ENCODE measurements at regions of chr6 and their contacts with region 1.

Region 1: DNA sequence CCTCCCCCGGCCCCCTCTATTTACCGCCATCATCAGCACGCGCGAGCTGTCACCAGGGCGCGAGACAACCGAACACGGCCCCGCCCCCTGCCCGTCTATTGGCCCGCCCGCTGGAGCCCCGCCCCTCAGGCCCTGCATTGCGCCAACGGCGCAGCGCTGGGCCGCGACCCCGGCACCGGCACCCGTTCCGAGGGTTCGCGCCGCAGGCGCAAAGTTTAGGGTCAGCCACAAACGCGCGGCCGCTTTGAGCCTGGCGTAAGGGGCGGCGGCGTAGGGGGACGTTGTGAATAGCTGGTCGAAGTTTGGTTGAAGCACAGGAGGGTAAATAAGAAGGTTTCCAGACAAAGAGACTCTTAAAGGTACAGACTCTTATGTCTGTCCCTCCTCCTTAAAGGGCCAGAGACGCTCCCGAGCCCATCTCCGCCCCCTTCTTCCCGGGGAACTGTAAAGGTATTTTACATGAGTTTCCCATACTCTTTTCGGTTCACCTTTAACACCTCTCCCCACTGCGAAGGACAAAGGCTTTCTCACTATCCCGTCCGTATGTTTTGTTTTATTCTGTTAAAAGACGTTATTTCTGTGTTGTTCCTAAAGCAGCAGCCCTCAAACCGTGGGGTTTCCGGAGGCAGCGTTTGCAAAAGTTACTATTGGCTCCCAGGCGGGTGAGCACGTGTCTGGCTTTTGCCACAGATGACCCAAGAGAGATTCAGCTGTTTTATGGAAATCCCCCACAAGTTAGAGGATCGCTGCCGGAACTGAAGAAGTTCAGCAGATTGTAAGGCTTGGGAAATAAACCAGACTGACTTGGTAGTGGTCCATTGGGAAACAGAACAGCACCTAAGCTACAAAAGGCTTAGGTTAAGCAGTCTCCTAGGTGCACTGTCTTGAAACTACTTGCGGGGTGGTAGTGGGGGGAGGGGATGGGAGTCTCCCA is at the start of gene USP49:
- DNase-seq: peak; percentile 85 to 96 (median 86)
- H3K4me3 ChIP-seq: peak within 1 kb of the TSS; percentile 85 to 95 (median 87)
- H3K4me3 Mint-ChIP-seq: peak within 1 kb of the TSS in 1 of 2 donors; percentile 94
- H3K27ac ChIP-seq: peak within 1 kb of the TSS; percentile 89 to 95
- H3K27ac Mint-ChIP-seq: peak within 1 kb of the TSS in 6 of 7 donors; percentile 90 to 97 (median 94)
- H3K4me1 ChIP-seq: peaks cover 18 to 24% of the 10 kb centered on the region in 2 donors
- H3K4me1 Mint-ChIP-seq: peaks cover 13% of the 10 kb centered on the region
- H3K27me3 ChIP-seq: peaks cover 2 to 5% of the 10 kb centered on the region in 2 donors
- H3K27me3 Mint-ChIP-seq: no peaks in the 10 kb centered on the region
- CTCF ChIP-seq: no peak
- polyA plus RNA-seq, gene USP49: 0.08 to 4.8 (median 0.37) TPM

Region 2: GRCh38 chr6:41723530-41724227 is 171.9 kb before region 1 on chr6:
- intact Hi-C with region 1: loop called in 1 of 2 experiments (anchors 10 kb)
- DNase-seq: peak; percentile 96 to 98 (median 98)
- H3K4me3 ChIP-seq: peak overlapping the region; percentile 43 to 79 (median 49)
- H3K4me3 Mint-ChIP-seq: peak overlapping the region; percentile 81 to 93
- H3K27ac ChIP-seq: peak overlapping the region; percentile 81 to 88
- H3K27ac Mint-ChIP-seq: peak overlapping the region; percentile 97 to 99 (median 98)
- H3K4me1 ChIP-seq: peaks cover 90 to 98% of the 10 kb centered on the region in 2 donors
- H3K4me1 Mint-ChIP-seq: peaks cover 92% of the 10 kb centered on the region
- H3K27me3 ChIP-seq: no peaks in the 10 kb centered on the region
- H3K27me3 Mint-ChIP-seq: peaks cover 0 to 1% (median 0%) of the 10 kb centered on the region in 3 donors
- CTCF ChIP-seq: no peak

Region 3: GRCh38 chr6:41914869-41915530 is 19.4 kb after region 1 on chr6:
- intact Hi-C with region 1: loop called in 1 of 2 experiments (anchors 2 kb)
- DNase-seq: no peak
- H3K4me3 ChIP-seq: no peak overlapping the region
- H3K4me3 Mint-ChIP-seq: no peak overlapping the region
- H3K27ac ChIP-seq: no peak overlapping the region
- H3K27ac Mint-ChIP-seq: peak overlapping the region in 1 of 7 donors; percentile 46
- H3K4me1 ChIP-seq: peaks cover 8 to 18% of the 10 kb centered on the region in 2 donors
- H3K4me1 Mint-ChIP-seq: peaks cover 20% of the 10 kb centered on the region
- H3K27me3 ChIP-seq: no peaks in the 10 kb centered on the region
- H3K27me3 Mint-ChIP-seq: no peaks in the 10 kb centered on the region
- CTCF ChIP-seq: no peak

Measured in CD14-positive monocyte (primary cell).